ENCODE measurements at regions of chr12 and their contacts with region 1.

Region 1: DNA sequence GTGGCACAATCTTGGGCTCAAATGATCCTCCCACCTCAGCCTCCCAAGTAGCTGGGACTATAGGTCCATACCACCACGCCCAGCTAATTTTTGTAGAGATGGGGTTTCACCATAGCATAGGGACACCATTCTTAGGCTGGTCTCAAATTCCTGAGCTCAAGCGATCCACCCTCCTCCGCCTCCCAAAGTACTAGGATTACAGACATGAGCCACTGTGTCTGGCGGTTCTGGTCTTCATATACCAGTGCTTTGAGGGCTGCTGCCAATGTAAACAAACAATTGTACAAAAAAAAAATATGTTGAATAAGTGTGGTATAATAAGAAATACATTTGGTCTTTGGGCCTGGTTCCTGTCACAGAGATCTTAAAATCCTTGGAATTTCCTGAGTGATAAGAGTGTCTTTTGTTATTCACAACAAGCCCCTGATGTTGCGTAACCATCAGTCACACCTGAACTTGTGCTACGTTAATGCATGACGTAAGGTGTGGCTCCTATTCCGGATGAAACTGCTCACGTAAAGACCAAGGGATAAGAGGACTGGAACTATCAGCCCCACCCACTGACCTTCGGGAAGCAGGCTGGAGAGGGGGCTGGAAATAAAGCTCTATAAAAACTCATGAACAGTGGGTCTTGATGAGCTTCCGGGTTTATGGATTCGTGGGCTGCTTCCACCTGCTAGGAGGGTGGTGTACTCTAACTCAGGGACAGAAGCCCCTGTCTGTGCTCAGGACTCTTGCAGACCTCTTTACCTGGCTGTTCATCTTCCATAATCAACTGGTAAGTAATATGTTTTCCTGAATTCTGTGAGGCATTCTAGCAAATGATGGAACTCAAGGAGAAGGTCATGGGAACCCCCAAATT is 16.5 kb upstream of the RIMKLB start:
- DNase-seq: peak in 1 of 2 experiments; percentile 52
- ATAC-seq: peak; percentile 28 to 45; a peak in 3 of 6 replicates
- H3K4me3 ChIP-seq: no peak overlapping the region
- H3K27ac ChIP-seq: no peak overlapping the region; a peak in 1 of 6 replicates
- H3K4me1 ChIP-seq: peaks cover 7% of the 10 kb centered on the region; the same call in 2 of the 3 replicates
- CTCF ChIP-seq: no peak
- EP300 ChIP-seq: no peak
- POLR2A ChIP-seq: no peak
- RAD21 ChIP-seq: no peak

Region 2: DNA sequence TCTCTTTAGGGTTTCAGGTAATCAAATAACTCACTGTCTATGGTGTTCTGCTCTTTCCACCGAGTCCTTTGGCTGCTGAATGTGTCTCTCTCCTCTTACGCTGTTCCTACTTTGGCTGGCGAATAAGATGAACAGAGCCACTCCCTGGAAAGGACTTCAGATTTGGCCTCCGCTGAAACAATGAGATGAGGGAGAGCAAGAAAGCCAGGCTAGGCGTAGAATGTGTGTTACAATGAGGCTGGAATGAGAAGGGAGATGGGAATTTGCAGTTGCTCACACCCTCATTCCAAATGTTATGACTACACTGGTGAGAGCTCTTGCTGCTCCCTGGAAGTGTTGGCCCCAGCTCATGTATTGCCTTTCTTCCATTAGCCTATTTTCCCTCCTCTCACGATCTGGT is 18.7 kb before region 1 on chr12 and contains the start of gene MFAP5:
- CTCF ChIA-PET with region 1: interaction called, 10 read pairs
- POLR2A ChIA-PET with region 1: no interaction called
- DNase-seq: no peak
- ATAC-seq: 0 out of 6 replicates have a peak, but pooled peaks of 1 of the 2 experiments have one; percentile 36
- H3K4me3 ChIP-seq: no peak within 1 kb of the TSS
- H3K27ac ChIP-seq: no peak within 1 kb of the TSS
- H3K4me1 ChIP-seq: no peaks in the 10 kb centered on the region; the same call in 2 of the 3 replicates
- CTCF ChIP-seq: no peak
- EP300 ChIP-seq: no peak
- POLR2A ChIP-seq: no peak
- RAD21 ChIP-seq: no peak
- polyA plus RNA-seq, gene MFAP5: 0.40 and 0.48 TPM in 2 replicates

Region 3: DNA sequence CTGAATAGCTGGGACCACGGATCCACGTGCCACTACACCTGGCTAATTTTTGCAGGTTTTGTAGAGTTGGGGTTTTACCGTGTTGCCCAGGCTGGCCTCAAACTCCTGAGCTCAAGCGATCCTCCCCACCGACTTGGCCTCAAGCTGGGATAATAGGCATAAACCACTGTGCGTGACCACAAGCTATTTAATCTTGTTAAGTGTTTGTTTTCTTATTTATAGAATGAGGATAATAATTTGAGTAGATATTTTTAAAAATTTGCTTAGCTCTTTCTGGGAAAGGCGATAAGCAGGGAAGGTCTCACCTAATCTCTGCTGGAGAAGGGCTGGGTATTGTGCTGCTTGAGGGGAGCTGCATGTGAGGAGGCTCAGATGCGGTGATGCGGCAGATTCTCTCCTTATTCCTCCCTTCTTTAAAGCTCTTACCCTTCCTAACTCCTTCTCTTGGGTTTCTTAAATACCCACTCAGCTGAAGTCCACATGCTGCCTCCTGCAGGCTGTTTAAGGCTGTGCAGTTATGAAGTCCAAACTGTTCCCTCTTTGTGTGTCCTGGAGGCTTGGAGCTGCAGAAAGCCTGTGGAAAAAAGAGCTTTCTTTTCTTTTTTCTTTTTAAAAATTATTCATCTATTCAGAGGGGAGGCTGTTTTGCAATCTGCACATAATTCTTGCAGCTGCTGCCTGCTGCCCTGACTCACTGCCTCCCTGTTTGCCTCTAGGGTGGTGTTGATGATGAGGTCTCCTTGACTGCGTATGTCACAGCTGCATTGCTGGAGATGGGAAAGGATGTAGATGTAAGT is 179.1 kb after region 1 on chr12:
- CTCF ChIA-PET with region 1: interaction called, 22 read pairs
- POLR2A ChIA-PET with region 1: no interaction called
- DNase-seq: peak in 1 of 2 experiments; percentile 69
- ATAC-seq: peak; percentile 81 to 93; a peak in 5 of 6 replicates
- H3K4me3 ChIP-seq: no peak overlapping the region
- H3K27ac ChIP-seq: no peak overlapping the region
- H3K4me1 ChIP-seq: no peaks in the 10 kb centered on the region
- CTCF ChIP-seq: peak; percentile 42; the same call in 2 of the 3 replicates
- EP300 ChIP-seq: no peak
- POLR2A ChIP-seq: no peak
- RAD21 ChIP-seq: peak; percentile 38 to 57; a peak in 4 of 5 replicates

Region 4: DNA sequence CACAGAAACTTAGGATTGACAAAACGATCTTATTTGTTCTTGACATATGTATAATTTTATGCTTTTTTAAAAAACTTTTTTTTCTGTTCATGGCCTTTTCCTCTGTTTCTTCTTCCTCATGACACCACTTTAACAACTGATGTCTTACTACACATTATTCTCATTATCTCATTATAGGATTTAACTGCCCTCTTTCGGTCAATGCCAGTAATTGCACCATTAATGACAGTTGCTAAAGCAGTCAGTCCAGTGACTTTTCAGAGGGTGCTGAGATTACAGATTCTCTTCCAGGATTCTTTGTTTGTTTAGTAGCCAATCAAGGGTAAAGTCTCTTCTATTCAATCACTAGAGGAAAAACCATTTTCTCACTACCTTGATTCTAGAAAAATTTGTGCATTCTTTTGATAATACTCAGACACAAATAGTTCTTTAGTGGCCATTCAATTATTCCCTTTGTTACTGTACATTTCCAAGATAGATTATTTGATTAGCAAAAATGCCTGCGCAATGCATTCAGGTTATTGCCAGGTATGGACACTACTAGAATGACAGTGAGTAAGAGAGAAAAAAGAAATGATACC is 358.2 kb after region 1 on chr12:
- CTCF ChIA-PET with region 1: interaction called, 21 read pairs
- POLR2A ChIA-PET with region 1: no interaction called
- DNase-seq: peak; percentile 58 to 78
- ATAC-seq: peak; percentile 77 to 88; a peak in 4 of 6 replicates
- H3K4me3 ChIP-seq: no peak overlapping the region
- H3K27ac ChIP-seq: no peak overlapping the region
- H3K4me1 ChIP-seq: no peaks in the 10 kb centered on the region
- CTCF ChIP-seq: peak; percentile 82
- EP300 ChIP-seq: no peak
- POLR2A ChIP-seq: no peak
- RAD21 ChIP-seq: peak; percentile 79 to 82